Activated CD8-positive, alpha-beta memory T cell treated with anti-CD3 and anti-CD28 coated beads, Interleukin-2, amount 10 ng/mL, durations not matched to agents 7 days and 5 days (primary cell): ENCODE measurements at regions of chr20 and their contacts with region 1.

Region 1: GRCh38 chr20:37384683-37385174 is 38.8 kb downstream of the SRC start:
- DNase-seq: peak; percentile 77
- ATAC-seq: peak; percentile 96
- H3K4me3 Mint-ChIP-seq: peak overlapping the region; percentile 59
- H3K27ac Mint-ChIP-seq: peak overlapping the region; percentile 17
- H3K4me1 Mint-ChIP-seq: peaks cover 4% of the 10 kb centered on the region
- H3K27me3 Mint-ChIP-seq: peaks cover 5% of the 10 kb centered on the region

Region 2: DNA sequence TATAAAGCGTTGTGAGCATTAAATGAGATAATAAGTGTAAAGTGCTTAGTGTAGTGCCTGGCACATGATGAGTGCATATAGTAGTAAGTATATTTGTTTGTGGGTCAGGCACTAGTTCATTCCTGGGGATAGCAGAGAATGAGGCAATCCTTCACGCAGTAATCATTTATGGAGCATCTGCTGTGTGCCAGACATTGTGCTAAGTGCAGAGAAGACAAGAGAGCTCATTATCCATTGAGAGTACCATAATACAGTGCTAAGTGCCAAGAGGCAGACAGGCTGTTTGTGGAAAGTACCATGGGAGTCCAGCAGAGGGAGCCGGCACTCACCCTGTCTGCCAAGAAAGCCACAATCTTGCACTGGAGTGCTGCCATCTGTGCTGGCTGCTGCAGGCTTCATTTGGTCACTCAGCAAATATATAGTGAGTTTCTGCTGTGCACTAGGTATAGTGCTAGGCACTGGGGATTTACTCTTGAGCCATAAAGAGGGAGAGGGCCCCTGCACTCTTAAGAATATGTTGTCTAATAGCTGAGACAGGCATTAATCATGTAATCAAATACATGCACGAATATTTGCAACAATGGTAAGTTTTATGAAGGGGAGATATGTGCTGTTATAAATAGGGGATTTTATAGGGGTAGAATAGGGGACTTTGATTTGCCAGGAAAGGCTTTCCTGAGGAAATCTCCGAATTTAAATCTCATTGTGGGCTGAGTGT is 192.4 kb before region 1 on chr20:
- CTCF ChIA-PET with region 1: interaction called, 20 read pairs
- DNase-seq: peak; percentile 80
- ATAC-seq: peak; percentile 79
- H3K4me3 Mint-ChIP-seq: no peak overlapping the region
- H3K27ac Mint-ChIP-seq: peak overlapping the region; percentile 8
- H3K4me1 Mint-ChIP-seq: peaks cover 64% of the 10 kb centered on the region
- H3K27me3 Mint-ChIP-seq: no peaks in the 10 kb centered on the region

Region 3: DNA sequence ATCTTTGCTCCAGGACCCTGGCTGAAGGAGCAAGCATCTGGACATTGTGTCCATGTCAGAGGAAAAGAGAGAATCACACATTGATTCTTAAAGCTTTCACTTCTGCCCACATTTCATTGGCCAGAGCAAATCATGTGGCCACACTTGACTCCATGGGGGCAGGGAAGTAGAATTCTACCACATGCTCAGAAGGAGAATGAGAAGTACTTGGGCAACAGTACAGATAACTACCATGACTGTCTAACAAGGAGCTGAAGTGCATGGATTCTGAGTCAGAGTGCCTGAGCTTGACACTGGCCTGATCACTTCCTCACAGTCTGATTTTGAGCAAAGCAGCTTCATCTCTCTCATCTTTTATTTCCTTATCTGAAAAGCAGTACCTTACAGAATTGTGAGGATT is 161.7 kb before region 1 on chr20:
- CTCF ChIA-PET with region 1: no interaction called
- DNase-seq: no peak
- ATAC-seq: no peak
- H3K4me3 Mint-ChIP-seq: no peak overlapping the region
- H3K27ac Mint-ChIP-seq: peak overlapping the region; percentile 51
- H3K4me1 Mint-ChIP-seq: peaks cover 3% of the 10 kb centered on the region
- H3K27me3 Mint-ChIP-seq: no peaks in the 10 kb centered on the region

Region 4: DNA sequence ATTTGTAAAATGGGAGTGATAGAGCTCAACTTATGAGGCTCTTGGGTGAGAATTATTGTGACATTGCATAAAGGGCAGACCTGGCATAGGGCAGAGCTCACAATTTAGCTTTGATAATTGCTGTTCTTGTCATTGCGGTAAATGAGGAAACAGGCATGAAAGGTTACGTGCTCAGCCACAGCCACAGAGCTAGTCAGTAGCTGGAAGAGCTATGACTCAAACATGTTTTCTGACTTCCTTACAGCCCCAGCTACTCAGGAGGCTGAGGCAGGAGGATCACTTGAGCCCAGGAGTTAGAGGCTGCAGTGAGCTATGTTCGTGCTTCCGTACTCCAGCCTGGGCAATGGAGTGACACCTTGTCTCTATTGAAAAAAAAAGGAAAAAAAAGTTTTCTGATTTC is 119.6 kb before region 1 on chr20:
- CTCF ChIA-PET with region 1: interaction called, 15 read pairs
- DNase-seq: peak; percentile 68
- ATAC-seq: peak; percentile 76
- H3K4me3 Mint-ChIP-seq: no peak overlapping the region
- H3K27ac Mint-ChIP-seq: peak overlapping the region; percentile 28
- H3K4me1 Mint-ChIP-seq: peaks cover 14% of the 10 kb centered on the region
- H3K27me3 Mint-ChIP-seq: peaks cover 16% of the 10 kb centered on the region

Region 5: GRCh38 chr20:37270576-37271420 is 113.9 kb before region 1 on chr20:
- CTCF ChIA-PET with region 1: interaction called, 16 read pairs
- DNase-seq: no peak
- ATAC-seq: no peak
- H3K4me3 Mint-ChIP-seq: no peak overlapping the region
- H3K27ac Mint-ChIP-seq: no peak overlapping the region
- H3K4me1 Mint-ChIP-seq: peaks cover 9% of the 10 kb centered on the region
- H3K27me3 Mint-ChIP-seq: no peaks in the 10 kb centered on the region

Region 6: GRCh38 chr20:37276494-37277252 is 108.1 kb before region 1 on chr20:
- CTCF ChIA-PET with region 1: interaction called, 16 read pairs
- DNase-seq: no peak
- ATAC-seq: peak; percentile 47
- H3K4me3 Mint-ChIP-seq: no peak overlapping the region
- H3K27ac Mint-ChIP-seq: no peak overlapping the region
- H3K4me1 Mint-ChIP-seq: peaks cover 9% of the 10 kb centered on the region
- H3K27me3 Mint-ChIP-seq: peaks cover 2% of the 10 kb centered on the region

Region 7: DNA sequence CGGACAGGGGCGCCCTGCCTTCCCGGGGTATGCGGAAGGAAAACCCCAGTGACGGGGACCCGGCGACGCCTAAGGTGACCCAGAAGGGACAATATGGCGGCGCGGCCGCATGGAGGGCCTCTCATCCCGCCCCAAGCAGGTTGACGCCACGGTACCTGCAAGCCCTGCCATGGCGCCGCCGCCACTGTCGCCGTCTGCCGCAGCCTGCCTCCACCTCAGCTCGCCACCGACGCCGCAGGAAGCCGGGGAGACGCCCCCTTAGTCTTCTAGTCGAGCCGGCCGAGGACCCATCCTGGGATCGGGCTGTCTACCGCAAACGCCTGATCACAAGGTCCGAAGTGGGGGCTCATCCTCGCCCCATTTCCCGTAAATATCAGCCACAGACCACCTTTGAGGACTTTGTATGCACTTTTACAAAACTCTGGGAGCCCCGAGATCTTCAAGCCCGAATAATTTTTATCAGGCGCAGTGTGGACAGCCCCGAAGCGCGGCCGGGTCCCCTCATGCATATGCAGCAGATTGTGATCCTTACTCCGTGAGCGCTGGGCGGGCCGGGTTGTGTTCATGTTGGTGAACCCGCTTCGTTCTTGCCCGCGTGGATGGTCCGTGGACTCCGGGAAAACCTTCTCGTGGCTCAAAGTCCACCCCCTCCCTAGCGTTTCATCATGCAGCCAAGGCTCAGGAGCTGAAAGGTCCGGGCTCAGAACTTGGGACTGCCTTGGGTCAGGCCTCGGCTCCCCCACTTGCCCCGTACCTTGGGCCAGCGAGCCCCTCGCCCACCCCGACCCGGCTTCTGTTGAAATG is 143.1 kb after region 1 on chr20 and contains the start of gene BLCAP:
- CTCF ChIA-PET with region 1: no interaction called
- DNase-seq: peak; percentile 93
- ATAC-seq: peak; percentile 92
- H3K4me3 Mint-ChIP-seq: peak within 1 kb of the TSS; percentile 76
- H3K27ac Mint-ChIP-seq: peak within 1 kb of the TSS; percentile 95
- H3K4me1 Mint-ChIP-seq: peaks cover 42% of the 10 kb centered on the region
- H3K27me3 Mint-ChIP-seq: no peaks in the 10 kb centered on the region
- total RNA-seq, gene BLCAP: 32.0 to 36.3 TPM